Activated naive CD4-positive, alpha-beta T cell treated with anti-CD3 and anti-CD28 coated beads for 36 hours (primary cell): ENCODE measurements at regions of chr11 and their contacts with region 1.

Region 1: DNA sequence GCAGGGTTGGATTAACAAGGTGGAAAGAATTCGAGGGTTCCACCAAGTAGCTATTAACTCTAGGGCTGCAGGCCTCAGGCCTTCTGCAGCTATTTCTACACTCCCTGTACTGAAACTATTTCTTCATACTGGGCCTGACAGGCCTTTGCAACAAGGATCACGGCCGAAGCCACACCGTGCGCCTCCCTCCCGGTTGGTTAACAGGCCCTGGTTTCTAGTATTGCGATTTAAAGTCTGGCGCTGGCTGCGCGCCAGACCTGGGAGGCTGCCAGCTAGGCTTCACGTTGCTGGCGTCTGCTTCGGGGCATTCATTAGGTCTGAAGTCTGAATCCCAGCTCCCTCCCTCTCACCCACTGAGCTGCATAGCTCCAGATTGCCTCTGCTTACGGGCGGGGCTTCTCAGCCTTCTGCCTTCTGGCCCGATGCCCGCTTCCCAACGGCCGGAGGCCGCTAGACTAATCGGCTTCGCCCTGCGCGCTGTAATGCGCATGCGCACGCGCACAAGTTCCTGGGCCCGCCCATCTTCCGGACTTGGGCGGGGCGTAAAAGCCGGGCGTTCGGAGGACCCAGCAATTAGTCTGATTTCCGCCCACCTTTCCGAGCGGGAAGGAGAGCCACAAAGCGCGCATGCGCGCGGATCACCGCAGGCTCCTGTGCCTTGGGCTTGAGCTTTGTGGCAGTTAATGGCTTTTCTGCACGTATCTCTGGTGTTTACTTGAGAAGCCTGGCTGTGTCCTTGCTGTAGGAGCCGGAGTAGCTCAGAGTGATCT is 1.6 kb downstream of the LDHA start:
- DNase-seq: peak; percentile 96
- H3K4me3 Mint-ChIP-seq: peak overlapping the region; percentile 97
- H3K27ac Mint-ChIP-seq: peak overlapping the region; percentile 99
- H3K4me1 Mint-ChIP-seq: peaks cover 62% of the 10 kb centered on the region
- H3K27me3 Mint-ChIP-seq: no peaks in the 10 kb centered on the region

Region 2: DNA sequence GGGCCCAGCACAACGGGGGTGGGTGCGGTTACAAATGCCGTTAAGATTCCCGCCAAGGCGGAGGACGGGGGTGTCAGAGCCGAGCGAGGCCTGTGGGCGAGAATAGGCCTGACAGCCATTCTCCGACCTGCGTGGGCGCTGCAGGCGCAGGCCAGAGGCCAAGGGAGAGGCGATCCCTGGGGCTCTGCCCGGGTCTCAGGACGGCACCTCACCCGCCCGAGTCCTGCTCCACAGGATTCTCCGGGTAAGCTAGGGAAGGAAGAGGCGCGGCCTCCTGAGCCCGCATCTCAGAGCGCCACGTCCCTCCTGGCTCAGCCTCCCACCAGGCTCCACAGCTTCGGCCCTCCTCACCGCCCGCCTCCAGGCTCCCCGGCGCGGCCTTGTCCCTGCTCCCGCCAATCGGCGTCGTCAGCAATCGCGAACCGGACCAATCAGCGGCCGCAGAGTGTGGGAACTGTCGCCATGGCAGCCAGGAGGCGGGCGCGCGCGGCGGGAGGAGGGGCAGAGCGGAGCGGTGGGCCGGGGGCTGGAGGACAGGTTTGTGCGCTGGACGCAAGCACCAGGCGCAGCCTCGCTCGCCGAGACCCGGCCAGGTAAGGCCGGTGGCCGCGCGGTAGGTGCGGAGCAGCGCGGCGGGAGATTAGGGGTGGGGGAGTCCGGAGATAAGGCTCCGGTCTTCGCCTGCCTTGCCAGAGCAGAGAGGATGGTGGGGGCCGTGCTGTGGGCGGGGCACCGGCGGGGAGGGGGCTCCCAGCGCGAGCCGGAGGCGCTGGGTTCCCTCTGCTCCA is 1119.5 kb before region 1 on chr11 and contains the start of gene NUCB2:
- CTCF ChIA-PET with region 1: no interaction called
- intact Hi-C with region 1: loop called (anchors 5 kb)
- DNase-seq: peak; percentile 98
- H3K4me3 Mint-ChIP-seq: peak within 1 kb of the TSS; percentile 75
- H3K27ac Mint-ChIP-seq: peak within 1 kb of the TSS; percentile 83
- H3K4me1 Mint-ChIP-seq: peaks cover 33% of the 10 kb centered on the region
- H3K27me3 Mint-ChIP-seq: no peaks in the 10 kb centered on the region
- total RNA-seq, gene NUCB2: 67.7 to 74.0 TPM

Region 3: GRCh38 chr11:17781221-17781620 is 614.7 kb before region 1 on chr11:
- CTCF ChIA-PET with region 1: no interaction called
- intact Hi-C with region 1: no loop called
- DNase-seq: no peak
- H3K4me3 Mint-ChIP-seq: no peak overlapping the region
- H3K27ac Mint-ChIP-seq: no peak overlapping the region
- H3K4me1 Mint-ChIP-seq: no peaks in the 10 kb centered on the region
- H3K27me3 Mint-ChIP-seq: no peaks in the 10 kb centered on the region

Region 4: DNA sequence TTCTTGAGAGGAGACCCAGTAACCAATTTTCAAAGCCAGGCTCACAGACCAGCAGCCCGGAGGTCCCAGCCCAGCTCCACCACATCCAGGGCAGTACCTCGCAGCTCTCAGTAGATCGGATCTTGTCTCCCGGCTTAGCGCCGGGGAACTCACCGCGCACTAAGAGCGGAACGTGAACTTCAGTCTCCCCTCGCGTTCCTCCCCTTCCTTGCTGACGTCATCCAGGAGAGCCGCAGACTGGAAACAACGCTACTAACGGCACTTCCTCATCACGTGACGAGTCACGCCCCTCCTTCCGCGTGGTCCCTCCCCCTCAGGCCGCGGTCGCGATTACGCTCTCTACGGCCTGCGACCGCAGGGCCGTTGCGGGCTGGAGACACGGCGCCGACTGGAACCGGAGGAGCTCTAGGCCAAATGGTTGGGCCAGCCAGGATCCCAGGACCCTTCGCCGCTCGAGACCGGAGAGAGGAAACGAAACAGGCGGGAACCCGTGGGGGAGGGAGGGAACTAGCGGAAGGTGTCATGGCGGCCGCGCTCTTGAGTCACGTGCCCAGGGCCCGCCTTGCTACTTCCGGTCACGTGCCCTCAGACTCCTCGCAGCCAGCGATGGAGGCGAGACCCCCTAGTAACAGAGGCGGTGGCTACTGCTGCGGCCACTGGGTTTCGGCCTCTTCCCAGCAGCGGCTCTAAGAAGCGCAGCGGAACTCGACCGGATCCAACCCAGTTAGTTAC is 73.8 kb before region 1 on chr11 and contains the starts of genes GTF2H1 and HPS5:
- CTCF ChIA-PET with region 1: interaction called, 4 read pairs
- intact Hi-C with region 1: loop called (anchors 1 kb)
- DNase-seq: peak; percentile 98
- H3K4me3 Mint-ChIP-seq: peak within 1 kb of the TSS; percentile 98
- H3K27ac Mint-ChIP-seq: peak within 1 kb of the TSS; percentile 100
- H3K4me1 Mint-ChIP-seq: peaks cover 64% of the 10 kb centered on the region
- H3K27me3 Mint-ChIP-seq: no peaks in the 10 kb centered on the region
- total RNA-seq, gene GTF2H1: 33.4 to 34.1 TPM
- total RNA-seq, gene HPS5: 21.7 to 21.9 TPM

Region 5: GRCh38 chr11:18471995-18472394 is 76.1 kb after region 1 on chr11:
- CTCF ChIA-PET with region 1: no interaction called
- intact Hi-C with region 1: loop called (anchors 1 kb)
- DNase-seq: peak; percentile 40
- H3K4me3 Mint-ChIP-seq: no peak overlapping the region
- H3K27ac Mint-ChIP-seq: no peak overlapping the region
- H3K4me1 Mint-ChIP-seq: peaks cover 21% of the 10 kb centered on the region
- H3K27me3 Mint-ChIP-seq: no peaks in the 10 kb centered on the region

Region 6: DNA sequence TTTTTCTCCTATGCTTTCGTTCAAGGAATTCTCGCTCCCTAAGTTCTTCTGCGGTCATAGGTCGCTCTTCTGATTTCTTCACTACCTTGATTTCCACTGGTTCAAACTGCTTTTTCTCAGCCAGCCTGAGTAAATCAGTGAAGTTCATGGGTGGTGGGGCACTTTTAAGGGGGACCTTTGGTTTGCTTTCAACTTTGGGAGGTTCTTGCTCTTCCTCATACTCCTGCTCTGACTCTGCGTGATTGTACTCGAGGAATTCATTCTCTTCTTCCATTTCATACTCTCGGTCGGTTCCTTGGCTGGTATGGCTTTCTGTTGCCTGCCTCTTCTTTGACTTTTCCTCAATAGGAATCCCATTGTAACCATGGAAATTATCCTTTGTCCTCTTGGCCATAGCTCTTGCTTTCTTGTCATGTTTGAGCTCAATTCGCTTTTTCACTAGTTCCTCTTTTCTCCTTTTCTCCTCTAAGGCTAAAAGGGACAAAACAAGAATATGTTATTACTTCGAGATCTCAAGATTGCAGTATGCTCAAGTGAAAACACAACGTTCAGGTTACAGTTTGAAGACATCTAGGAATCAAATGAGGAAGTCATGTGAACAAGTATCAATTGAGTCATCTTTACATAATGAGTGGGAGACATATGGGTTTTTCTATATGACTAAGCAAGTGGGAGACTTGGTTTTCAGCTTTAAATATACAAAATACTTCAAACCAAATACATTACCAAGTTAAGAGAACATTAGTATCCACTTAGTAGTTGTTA is 219.9 kb after region 1 on chr11:
- CTCF ChIA-PET with region 1: no interaction called
- intact Hi-C with region 1: loop called (anchors 5 kb)
- DNase-seq: no peak
- H3K4me3 Mint-ChIP-seq: no peak overlapping the region
- H3K27ac Mint-ChIP-seq: peak overlapping the region; percentile 78
- H3K4me1 Mint-ChIP-seq: peaks cover 46% of the 10 kb centered on the region
- H3K27me3 Mint-ChIP-seq: no peaks in the 10 kb centered on the region

Region 7: DNA sequence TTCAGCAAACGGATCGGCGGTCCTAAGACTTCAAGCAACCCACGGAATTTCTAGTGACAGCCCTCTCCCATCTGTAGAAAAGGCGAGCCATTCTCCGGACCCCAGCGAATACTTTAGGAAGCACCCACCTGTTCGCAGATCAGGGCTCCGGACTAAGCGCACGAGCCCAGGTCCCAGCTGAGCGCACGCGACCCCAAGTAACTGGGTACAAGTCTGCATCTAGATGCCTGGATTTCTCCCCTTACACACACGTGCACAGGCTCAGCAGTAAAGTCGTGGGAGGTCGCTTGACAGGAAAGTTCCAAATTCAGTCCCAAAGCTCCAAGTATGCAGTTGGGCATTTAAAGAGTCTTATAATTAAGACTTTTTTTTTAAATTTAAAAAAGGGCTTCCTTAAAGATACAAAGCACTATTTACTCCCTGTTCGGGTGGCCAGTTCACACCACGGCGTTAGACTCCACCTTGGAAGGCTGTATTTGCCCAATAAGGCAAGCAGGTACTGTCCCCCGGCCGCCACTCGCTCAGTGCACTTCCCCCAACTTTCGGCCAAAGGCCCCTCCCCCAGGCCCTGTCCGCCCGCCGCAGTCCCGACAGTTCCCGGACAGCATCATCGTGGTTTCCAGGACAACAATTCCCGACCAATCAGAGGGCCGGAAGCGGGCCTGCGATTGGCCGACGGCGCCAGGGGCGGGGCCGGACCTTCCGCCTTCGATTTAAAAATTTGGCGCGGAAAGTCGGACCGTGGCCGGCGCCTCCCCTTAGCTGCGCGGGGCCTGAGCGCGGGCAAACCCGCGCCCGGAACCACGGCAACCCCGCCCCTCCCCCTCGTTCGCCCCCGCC is 844.7 kb after region 1 on chr11 and contains the start of gene E2F8:
- CTCF ChIA-PET with region 1: no interaction called
- intact Hi-C with region 1: loop called (anchors 5 kb)
- DNase-seq: peak; percentile 96
- H3K4me3 Mint-ChIP-seq: peak within 1 kb of the TSS; percentile 93
- H3K27ac Mint-ChIP-seq: peak within 1 kb of the TSS; percentile 66
- H3K4me1 Mint-ChIP-seq: peaks cover 15% of the 10 kb centered on the region
- H3K27me3 Mint-ChIP-seq: peaks cover 47% of the 10 kb centered on the region
- total RNA-seq, gene E2F8: 19.5 to 21.2 TPM